Calu3 (cell line): ENCODE measurements at regions of chr20 and their contacts with region 1.

Region 1: DNA sequence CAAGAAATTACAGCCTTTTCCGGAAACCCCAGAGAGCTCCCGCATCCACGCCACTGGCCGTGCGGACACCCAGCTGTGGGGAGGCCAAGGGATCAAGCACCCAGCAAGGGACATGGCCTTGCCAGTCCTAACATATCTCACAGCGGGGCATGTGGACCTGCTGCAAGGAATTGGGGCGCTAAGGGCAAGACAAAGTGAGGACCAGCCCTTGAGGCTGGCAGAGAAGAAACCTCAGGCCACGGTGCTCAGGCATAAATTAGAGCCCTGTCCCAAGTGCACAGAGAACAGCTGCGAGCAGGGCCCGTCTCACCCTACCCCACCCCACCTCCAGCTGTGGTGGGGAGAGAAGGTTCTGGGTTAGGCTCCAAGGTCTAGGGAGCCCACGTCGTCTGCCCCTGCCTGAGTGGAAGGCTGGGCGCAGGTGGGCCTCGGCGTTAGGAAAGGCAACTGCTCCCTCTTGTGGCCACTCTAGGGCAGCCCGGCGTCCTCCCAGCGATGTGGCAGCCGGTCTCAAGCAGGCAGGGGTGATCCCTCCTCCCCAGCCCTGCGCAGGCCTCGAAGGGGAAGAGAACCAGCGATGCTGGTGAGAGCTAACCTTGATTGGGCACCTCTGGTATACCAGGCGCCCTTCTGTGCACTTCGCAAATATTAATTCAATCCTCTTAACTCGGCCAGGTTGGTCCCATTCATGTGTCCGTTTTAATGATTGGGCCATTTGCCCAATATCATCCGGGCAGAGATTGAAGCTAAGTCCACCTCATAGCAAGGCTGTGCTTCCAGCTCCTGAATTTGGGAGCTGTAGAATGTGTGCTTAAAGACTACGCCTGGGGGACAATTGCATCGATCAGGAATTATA is 235.8 kb downstream of the NFATC2 start:
- DNase-seq: peak; percentile 92
- H3K4me3 Mint-ChIP-seq: no peak overlapping the region
- H3K27ac Mint-ChIP-seq: no peak overlapping the region
- H3K4me1 Mint-ChIP-seq: peaks cover 25% of the 10 kb centered on the region
- H3K27me3 Mint-ChIP-seq: peaks cover 32% of the 10 kb centered on the region
- CTCF ChIP-seq: peak; percentile 98

Region 2: GRCh38 chr20:50992733-50993457 is 313.8 kb before region 1 on chr20:
- CTCF ChIA-PET with region 1: interaction called, 49 read pairs
- intact Hi-C with region 1: loop called (anchors 1 kb)
- DNase-seq: peak; percentile 75
- H3K4me3 Mint-ChIP-seq: no peak overlapping the region
- H3K27ac Mint-ChIP-seq: no peak overlapping the region
- H3K4me1 Mint-ChIP-seq: peaks cover 10% of the 10 kb centered on the region
- H3K27me3 Mint-ChIP-seq: peaks cover 72% of the 10 kb centered on the region
- CTCF ChIP-seq: peak; percentile 86

Region 3: GRCh38 chr20:51208162-51208561 is 98.6 kb before region 1 on chr20:
- CTCF ChIA-PET with region 1: no interaction called
- intact Hi-C with region 1: no loop called
- DNase-seq: no peak
- H3K4me3 Mint-ChIP-seq: no peak overlapping the region
- H3K27ac Mint-ChIP-seq: no peak overlapping the region
- H3K4me1 Mint-ChIP-seq: no peaks in the 10 kb centered on the region
- H3K27me3 Mint-ChIP-seq: peaks cover 86% of the 10 kb centered on the region
- CTCF ChIP-seq: no peak

Region 4: DNA sequence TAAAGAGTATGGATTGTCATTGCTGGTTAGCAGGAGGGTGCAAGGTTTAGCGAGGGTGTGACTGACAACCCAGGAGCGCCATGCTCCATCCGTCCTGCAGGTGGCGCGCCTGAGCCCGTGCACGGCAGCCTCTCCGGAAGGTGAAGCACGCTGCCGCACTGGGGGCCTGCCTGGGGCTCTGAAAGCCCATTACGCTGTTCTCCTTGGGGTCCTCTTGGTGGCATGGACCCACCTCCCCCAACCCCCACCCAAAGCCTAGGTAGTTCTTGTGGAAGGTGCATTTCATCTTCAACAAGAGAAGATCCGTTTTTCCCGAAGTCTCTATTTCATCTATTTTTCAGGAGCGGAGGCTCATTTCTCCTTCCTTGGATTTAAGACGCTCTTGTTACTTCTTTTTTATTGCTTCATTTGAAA is 86.4 kb before region 1 on chr20:
- CTCF ChIA-PET with region 1: no interaction called
- intact Hi-C with region 1: loop called (anchors 1 kb)
- DNase-seq: peak; percentile 78
- H3K4me3 Mint-ChIP-seq: no peak overlapping the region
- H3K27ac Mint-ChIP-seq: no peak overlapping the region
- H3K4me1 Mint-ChIP-seq: peaks cover 13% of the 10 kb centered on the region
- H3K27me3 Mint-ChIP-seq: peaks cover 61% of the 10 kb centered on the region
- CTCF ChIP-seq: peak; percentile 96